IMR-90 (cell line): ENCODE measurements at regions of chr2 and their contacts with region 1.

Region 1: DNA sequence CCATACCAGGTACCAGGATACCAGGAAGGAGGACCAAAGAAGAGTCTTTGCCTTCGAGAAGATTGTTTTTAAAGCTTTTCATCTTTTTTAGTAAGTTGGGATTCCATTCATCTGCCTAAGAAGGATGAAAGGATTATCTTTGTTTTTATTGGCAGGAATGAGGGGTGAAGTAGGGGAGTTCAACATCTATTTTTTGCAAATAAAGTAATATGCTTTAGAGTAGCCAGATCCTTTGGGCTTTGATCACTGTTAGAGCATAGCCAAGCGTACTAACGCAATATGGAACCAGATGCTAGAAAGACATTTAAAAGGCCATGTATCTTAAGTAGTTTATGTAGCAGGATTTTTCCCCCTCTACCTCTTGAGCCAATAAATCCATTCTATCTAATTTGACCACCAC is 133.0 kb downstream of the PRPF40A start:
- DNase-seq: peak; percentile 48
- ATAC-seq: no peak
- H3K4me3 ChIP-seq: no peak overlapping the region
- H3K27ac ChIP-seq: no peak overlapping the region
- H3K4me1 ChIP-seq: peaks cover 12% of the 10 kb centered on the region
- H3K27me3 ChIP-seq: no peaks in the 10 kb centered on the region
- CTCF ChIP-seq: no peak
- POLR2A ChIP-seq: no peak
- RAD21 ChIP-seq: no peak

Region 2: GRCh38 chr2:152611458-152612231 is 27.3 kb after region 1 on chr2:
- CTCF ChIA-PET with region 1: no interaction called
- POLR2A ChIA-PET with region 1: no interaction called
- dilution Hi-C with region 1: no loop called
- in situ Hi-C with region 1: no loop called
- intact Hi-C with region 1: loop called (anchors 1 kb)
- DNase-seq: peak; percentile 80
- ATAC-seq: peak; percentile 84
- H3K4me3 ChIP-seq: no peak overlapping the region
- H3K27ac ChIP-seq: no peak overlapping the region
- H3K4me1 ChIP-seq: peaks cover 5% of the 10 kb centered on the region; the same call in 1 of the 2 replicates
- H3K27me3 ChIP-seq: no peaks in the 10 kb centered on the region
- CTCF ChIP-seq: no peak
- POLR2A ChIP-seq: no peak
- RAD21 ChIP-seq: no peak